PC-3 (cell line): ENCODE measurements at regions of chr18 and their contacts with region 1.

Region 1: DNA sequence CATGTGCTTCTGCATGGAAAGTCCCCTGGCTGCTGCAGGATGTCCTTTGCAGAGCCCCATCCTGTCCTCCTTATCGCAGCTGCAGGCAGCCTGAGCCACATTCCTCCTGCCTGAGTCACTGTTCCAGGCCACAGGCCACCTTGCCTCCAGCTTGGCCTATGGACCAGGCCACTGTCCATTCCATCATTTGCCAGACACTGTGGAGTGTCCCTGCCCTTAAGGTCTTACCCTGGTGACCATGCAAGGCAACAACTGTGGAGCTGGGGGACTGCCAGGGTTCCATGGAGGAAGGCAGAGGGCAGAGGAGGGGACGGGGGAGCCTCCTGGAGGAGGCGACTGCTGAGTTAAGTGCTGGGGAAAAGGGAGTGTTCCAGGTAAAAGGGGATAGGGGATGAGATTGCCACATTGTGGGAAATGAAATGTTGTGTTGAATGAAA is 38.7 kb downstream of the INO80C start:
- DNase-seq: peak; percentile 71
- ATAC-seq: peak; percentile 61
- H3K4me3 ChIP-seq: no peak overlapping the region
- H3K27ac ChIP-seq: peak overlapping the region; percentile 84
- H3K4me1 ChIP-seq: peaks cover 75% of the 10 kb centered on the region
- H3K27me3 ChIP-seq: no peaks in the 10 kb centered on the region
- CTCF ChIP-seq: no peak

Region 2: DNA sequence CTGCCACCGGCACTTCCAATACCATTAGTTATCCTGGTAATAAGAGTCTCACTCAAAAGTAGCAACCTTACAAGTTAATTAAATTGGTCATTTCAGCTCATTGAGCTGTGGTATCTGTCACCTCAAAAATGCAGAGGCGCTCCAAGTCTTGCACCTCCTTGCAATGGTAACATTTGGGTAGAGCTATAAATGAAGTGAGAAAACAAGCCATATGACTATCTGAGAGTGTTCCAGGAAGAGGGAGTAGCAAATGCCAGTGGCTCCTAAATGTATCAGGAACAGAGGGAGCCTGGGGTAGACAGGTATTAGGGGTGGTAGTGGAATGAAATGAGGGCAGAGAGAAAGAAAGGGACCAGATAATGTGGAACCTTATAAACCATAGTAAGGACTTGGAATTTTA is 163.0 kb before region 1 on chr18:
- CTCF ChIA-PET with region 1: no interaction called
- POLR2A ChIA-PET with region 1: no interaction called
- intact Hi-C with region 1: no loop called
- DNase-seq: no peak
- ATAC-seq: no peak
- H3K4me3 ChIP-seq: no peak overlapping the region
- H3K27ac ChIP-seq: no peak overlapping the region
- H3K4me1 ChIP-seq: no peaks in the 10 kb centered on the region
- H3K27me3 ChIP-seq: no peaks in the 10 kb centered on the region
- CTCF ChIP-seq: no peak

Region 3: GRCh38 chr18:35436076-35436649 is 22.9 kb before region 1 on chr18:
- CTCF ChIA-PET with region 1: no interaction called
- POLR2A ChIA-PET with region 1: interaction called, 5 read pairs
- intact Hi-C with region 1: loop called (anchors 1 kb)
- DNase-seq: peak; percentile 68
- ATAC-seq: peak; percentile 73
- H3K4me3 ChIP-seq: no peak overlapping the region
- H3K27ac ChIP-seq: peak overlapping the region; percentile 90
- H3K4me1 ChIP-seq: peaks cover 39% of the 10 kb centered on the region
- H3K27me3 ChIP-seq: no peaks in the 10 kb centered on the region
- CTCF ChIP-seq: no peak

Region 4: DNA sequence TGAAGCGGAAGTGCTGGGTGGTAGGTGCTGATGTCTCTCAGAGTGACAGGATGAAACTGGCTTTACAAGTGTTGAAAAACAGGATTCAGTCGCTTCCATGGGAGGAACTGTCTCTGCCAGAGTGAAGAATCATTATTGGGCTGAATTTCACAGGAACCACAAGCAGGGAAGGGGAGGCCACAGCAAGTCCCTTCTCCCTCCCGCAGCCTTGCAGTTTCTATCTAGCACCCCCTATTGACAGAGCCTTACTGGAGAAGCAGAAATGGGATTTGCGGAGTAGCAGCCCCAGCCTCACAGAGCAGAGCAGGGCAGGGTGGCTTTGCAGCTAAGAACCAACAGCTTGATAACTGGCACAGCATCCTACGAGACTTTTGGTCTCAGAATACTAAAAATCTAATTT is 480.1 kb after region 1 on chr18:
- CTCF ChIA-PET with region 1: no interaction called
- POLR2A ChIA-PET with region 1: no interaction called
- intact Hi-C with region 1: no loop called
- DNase-seq: peak; percentile 3
- ATAC-seq: no peak
- H3K4me3 ChIP-seq: no peak overlapping the region
- H3K27ac ChIP-seq: peak overlapping the region; percentile 74
- H3K4me1 ChIP-seq: peaks cover 26% of the 10 kb centered on the region
- H3K27me3 ChIP-seq: no peaks in the 10 kb centered on the region
- CTCF ChIP-seq: no peak; the same call in 1 of the 2 replicates